Left ventricle myocardium inferior (tissue), 1 donor: ENCODE measurements at regions of chr13 and their contacts with region 1.

Region 1: DNA sequence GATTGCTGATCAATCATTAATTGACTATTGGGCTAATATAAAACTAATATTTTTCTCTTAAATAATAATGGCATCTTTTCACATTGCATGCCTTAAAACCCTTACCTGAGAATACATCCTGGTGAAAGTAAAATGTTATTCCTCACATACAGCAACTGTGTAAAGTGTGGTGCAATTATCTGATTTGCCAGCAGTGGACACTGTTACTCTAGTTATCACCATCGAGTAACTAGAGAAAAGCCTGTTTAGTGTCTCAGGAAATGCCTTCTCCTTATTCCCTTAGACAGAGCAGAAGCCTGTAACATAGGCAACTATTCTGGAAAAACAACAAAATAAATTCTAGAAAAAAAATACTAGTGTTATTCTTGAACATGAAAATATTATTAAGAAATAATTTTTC is 459.8 kb downstream of the FGF14 start:
- DNase-seq: no peak
- H3K4me3 ChIP-seq: no peak overlapping the region
- H3K27ac ChIP-seq: no peak overlapping the region
- H3K4me1 ChIP-seq: no peaks in the 10 kb centered on the region
- H3K27me3 ChIP-seq: no peaks in the 10 kb centered on the region
- CTCF ChIP-seq: peak; percentile 82

Region 2: GRCh38 chr13:102460801-102461200 is 518.8 kb after region 1 on chr13:
- intact Hi-C with region 1: loop called (anchors 5 kb)
- DNase-seq: no peak
- H3K4me3 ChIP-seq: no peak overlapping the region
- H3K27ac ChIP-seq: no peak overlapping the region
- H3K4me1 ChIP-seq: no peaks in the 10 kb centered on the region
- H3K27me3 ChIP-seq: peaks cover 3% of the 10 kb centered on the region
- CTCF ChIP-seq: no peak

Region 3: DNA sequence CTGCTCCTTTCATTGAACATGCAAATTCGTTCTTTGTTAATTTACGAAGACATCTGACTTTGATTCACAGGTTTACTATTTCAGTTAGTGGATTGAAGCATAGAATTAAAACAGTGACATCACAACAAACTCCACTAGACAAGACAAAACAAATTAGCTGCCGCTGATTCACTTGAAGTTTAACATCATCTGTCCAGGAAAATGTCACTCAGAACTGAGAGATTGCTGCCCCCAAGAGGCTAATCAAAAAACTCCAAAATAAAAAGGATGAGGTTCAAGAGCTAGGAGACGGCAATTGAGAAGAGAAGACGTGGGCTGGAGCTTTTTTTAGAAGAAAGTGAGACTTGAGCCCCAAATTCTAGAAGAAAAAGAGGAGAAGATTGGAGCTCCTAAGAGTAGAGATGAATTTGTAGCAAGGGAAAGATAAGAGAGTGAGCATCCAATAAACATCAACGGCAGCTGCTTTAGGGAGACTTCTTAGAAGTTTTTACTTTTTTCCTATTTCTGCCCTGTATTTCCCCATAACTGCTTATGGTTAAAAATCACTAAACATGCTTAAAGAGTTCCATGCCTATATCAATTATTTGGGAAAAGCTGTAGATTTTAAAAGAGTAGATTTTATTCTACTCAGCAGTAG is 614.0 kb after region 1 on chr13:
- intact Hi-C with region 1: loop called (anchors 10 kb)
- DNase-seq: no peak
- H3K4me3 ChIP-seq: no peak overlapping the region
- H3K27ac ChIP-seq: no peak overlapping the region
- H3K4me1 ChIP-seq: no peaks in the 10 kb centered on the region
- H3K27me3 ChIP-seq: no peaks in the 10 kb centered on the region
- CTCF ChIP-seq: peak; percentile 58